Caco-2 (cell line): ENCODE measurements at regions of chr6 and their contacts with region 1.

Region 1: GRCh38 chr6:153357391-153357790 is 226.3 kb upstream of the RGS17 start:
- DNase-seq: no peak
- H3K4me3 ChIP-seq: no peak overlapping the region
- H3K4me3 Mint-ChIP-seq: no peak overlapping the region
- H3K27ac Mint-ChIP-seq: no peak overlapping the region
- H3K4me1 ChIP-seq: no peaks in the 10 kb centered on the region
- H3K4me1 Mint-ChIP-seq: no peaks in the 10 kb centered on the region
- H3K27me3 ChIP-seq: no peaks in the 10 kb centered on the region
- H3K27me3 Mint-ChIP-seq: peaks cover 6% of the 10 kb centered on the region
- CTCF ChIP-seq: no peak

Region 2: GRCh38 chr6:153392156-153392555 is 34.8 kb after region 1 on chr6:
- CTCF ChIA-PET with region 1: no interaction called
- POLR2A ChIA-PET with region 1: no interaction called
- intact Hi-C with region 1: loop called (anchors 2 kb)
- DNase-seq: no peak
- H3K4me3 ChIP-seq: no peak overlapping the region
- H3K4me3 Mint-ChIP-seq: no peak overlapping the region
- H3K27ac Mint-ChIP-seq: no peak overlapping the region
- H3K4me1 ChIP-seq: no peaks in the 10 kb centered on the region
- H3K4me1 Mint-ChIP-seq: no peaks in the 10 kb centered on the region
- H3K27me3 ChIP-seq: no peaks in the 10 kb centered on the region
- H3K27me3 Mint-ChIP-seq: no peaks in the 10 kb centered on the region
- CTCF ChIP-seq: no peak

Region 3: GRCh38 chr6:153476243-153476642 is 118.9 kb after region 1 on chr6:
- CTCF ChIA-PET with region 1: no interaction called
- POLR2A ChIA-PET with region 1: no interaction called
- intact Hi-C with region 1: loop called (anchors 5 kb)
- DNase-seq: no peak
- H3K4me3 ChIP-seq: no peak overlapping the region
- H3K4me3 Mint-ChIP-seq: no peak overlapping the region
- H3K27ac Mint-ChIP-seq: no peak overlapping the region
- H3K4me1 ChIP-seq: no peaks in the 10 kb centered on the region
- H3K4me1 Mint-ChIP-seq: no peaks in the 10 kb centered on the region
- H3K27me3 ChIP-seq: no peaks in the 10 kb centered on the region
- H3K27me3 Mint-ChIP-seq: no peaks in the 10 kb centered on the region
- CTCF ChIP-seq: no peak